Activated naive CD4-positive, alpha-beta T cell treated with anti-CD3 and anti-CD28 coated beads, Interleukin-2, amount 10 ng/mL, durations not matched to agents 7 days and 5 days (primary cell): ENCODE measurements at regions of chr22 and their contacts with region 1.

Region 1: GRCh38 chr22:41237707-41238569 is 2.8 kb downstream of the CHADL start:
- DNase-seq: peak; percentile 92
- H3K4me3 Mint-ChIP-seq: peak overlapping the region; percentile 71
- H3K27ac Mint-ChIP-seq: no peak overlapping the region
- H3K4me1 Mint-ChIP-seq: peaks cover 6% of the 10 kb centered on the region
- H3K27me3 Mint-ChIP-seq: peaks cover 15% of the 10 kb centered on the region

Region 2: DNA sequence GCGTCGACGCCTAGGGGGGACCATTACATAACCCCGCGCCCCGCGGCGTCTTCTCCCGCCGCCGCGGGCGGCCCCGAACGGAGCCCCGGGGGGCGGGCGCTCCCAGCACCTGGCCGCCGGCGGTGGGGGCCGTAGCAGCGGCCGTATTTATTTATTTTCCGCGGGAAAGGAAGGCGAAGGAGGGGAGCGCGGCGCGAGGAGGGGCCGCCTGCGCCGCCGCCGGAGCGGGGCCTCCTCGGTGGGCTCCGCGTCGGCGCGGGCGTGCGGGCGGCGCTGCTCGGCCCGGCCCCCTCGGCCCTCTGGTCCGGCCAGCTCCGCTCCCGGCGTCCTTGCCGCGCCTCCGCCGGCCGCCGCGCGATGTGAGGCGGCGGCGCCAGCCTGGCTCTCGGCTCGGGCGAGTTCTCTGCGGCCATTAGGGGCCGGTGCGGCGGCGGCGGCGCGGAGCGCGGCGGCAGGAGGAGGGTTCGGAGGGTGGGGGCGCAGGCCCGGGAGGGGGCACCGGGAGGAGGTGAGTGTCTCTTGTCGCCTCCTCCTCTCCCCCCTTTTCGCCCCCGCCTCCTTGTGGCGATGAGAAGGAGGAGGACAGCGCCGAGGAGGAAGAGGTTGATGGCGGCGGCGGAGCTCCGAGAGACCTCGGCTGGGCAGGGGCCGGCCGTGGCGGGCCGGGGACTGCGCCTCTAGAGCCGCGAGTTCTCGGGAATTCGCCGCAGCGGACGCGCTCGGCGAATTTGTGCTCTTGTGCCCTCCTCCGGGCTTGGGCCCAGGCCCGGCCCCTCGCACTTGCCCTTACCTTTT is 145.7 kb before region 1 on chr22 and contains the start of gene EP300:
- CTCF ChIA-PET with region 1: interaction called, 10 read pairs
- DNase-seq: peak; percentile 93
- H3K4me3 Mint-ChIP-seq: peak within 1 kb of the TSS; percentile 100
- H3K27ac Mint-ChIP-seq: peak within 1 kb of the TSS; percentile 100
- H3K4me1 Mint-ChIP-seq: peaks cover 42% of the 10 kb centered on the region
- H3K27me3 Mint-ChIP-seq: peaks cover 4% of the 10 kb centered on the region

Region 3: DNA sequence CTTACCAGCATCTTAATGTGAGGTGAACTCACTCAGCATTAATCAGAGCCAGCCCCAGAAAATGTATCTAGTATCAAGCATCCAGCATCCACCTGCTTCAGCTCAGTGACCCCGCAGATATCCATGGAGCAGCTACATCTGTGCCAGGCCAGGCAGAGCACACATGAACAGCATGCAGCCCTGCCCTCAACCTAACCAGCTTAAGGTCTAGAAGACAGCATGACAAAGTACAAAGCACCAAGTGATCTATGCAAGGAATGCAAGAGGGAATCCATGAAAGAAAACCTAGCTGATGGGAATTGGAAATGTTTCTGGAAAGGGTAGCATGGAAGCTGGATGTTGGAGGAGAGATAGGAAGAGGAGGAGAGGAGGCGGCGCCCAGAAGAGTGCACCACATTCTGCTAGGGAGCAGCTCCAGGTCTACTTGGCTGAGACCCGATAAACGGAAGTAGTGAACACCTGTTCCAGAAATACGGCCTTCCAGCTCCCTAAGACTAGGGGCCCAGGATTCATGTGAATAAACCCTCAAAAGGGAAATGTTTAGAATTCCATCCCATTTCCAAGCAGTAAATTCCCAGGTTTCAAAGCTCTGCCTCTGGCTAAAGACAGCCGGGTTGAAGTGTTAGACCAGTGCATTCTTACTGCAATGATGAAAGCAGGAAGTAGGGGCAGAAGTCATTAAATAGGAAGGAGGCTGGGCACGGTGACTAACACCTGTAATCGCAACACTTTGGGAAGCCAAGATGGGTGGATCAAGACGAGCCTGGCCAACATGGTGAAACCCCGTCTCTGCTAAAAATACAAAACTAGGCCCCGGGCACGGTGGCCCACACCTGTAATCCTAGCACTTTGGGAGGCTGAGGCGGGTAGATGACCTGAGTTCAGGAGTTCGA is 56.3 kb before region 1 on chr22:
- CTCF ChIA-PET with region 1: interaction called, 11 read pairs
- DNase-seq: no peak
- H3K4me3 Mint-ChIP-seq: no peak overlapping the region
- H3K27ac Mint-ChIP-seq: no peak overlapping the region
- H3K4me1 Mint-ChIP-seq: no peaks in the 10 kb centered on the region
- H3K27me3 Mint-ChIP-seq: no peaks in the 10 kb centered on the region

Region 4: GRCh38 chr22:41217553-41218157 is 20.3 kb before region 1 on chr22:
- CTCF ChIA-PET with region 1: interaction called, 11 read pairs
- DNase-seq: peak; percentile 72
- H3K4me3 Mint-ChIP-seq: peak overlapping the region; percentile 38
- H3K27ac Mint-ChIP-seq: peak overlapping the region; percentile 78
- H3K4me1 Mint-ChIP-seq: peaks cover 31% of the 10 kb centered on the region
- H3K27me3 Mint-ChIP-seq: no peaks in the 10 kb centered on the region

Region 5: GRCh38 chr22:41334215-41334614 is 96.3 kb after region 1 on chr22:
- CTCF ChIA-PET with region 1: no interaction called
- DNase-seq: no peak
- H3K4me3 Mint-ChIP-seq: no peak overlapping the region
- H3K27ac Mint-ChIP-seq: no peak overlapping the region
- H3K4me1 Mint-ChIP-seq: peaks cover 15% of the 10 kb centered on the region
- H3K27me3 Mint-ChIP-seq: no peaks in the 10 kb centered on the region